ENCODE measurements at regions of chr3 and their contacts with region 1.

Region 1: GRCh38 chr3:45507820-45508317 is 86.7 kb upstream of the LIMD1 start:
- DNase-seq: no peak
- ATAC-seq: no peak
- H3K4me3 ChIP-seq: no peak overlapping the region
- H3K27ac ChIP-seq: no peak overlapping the region
- H3K4me1 ChIP-seq: no peaks in the 10 kb centered on the region
- H3K27me3 ChIP-seq: no peaks in the 10 kb centered on the region
- CTCF ChIP-seq: no peak
- EP300 ChIP-seq: no peak
- POLR2A ChIP-seq: no peak
- RAD21 ChIP-seq: no peak

Region 2: GRCh38 chr3:44942202-44942921 is 565.5 kb before region 1 on chr3:
- CTCF ChIA-PET with region 1: no interaction called
- POLR2A ChIA-PET with region 1: no interaction called
- RAD21 ChIA-PET with region 1: no interaction called
- SMC1A ChIA-PET with region 1: no interaction called
- in situ Hi-C with region 1: no loop called
- intact Hi-C with region 1: no loop called
- DNase-seq: no peak
- ATAC-seq: no peak
- H3K4me3 ChIP-seq: no peak overlapping the region
- H3K27ac ChIP-seq: no peak overlapping the region
- H3K4me1 ChIP-seq: no peaks in the 10 kb centered on the region; the same call in 1 of the 2 replicates
- H3K27me3 ChIP-seq: no peaks in the 10 kb centered on the region
- CTCF ChIP-seq: no peak
- EP300 ChIP-seq: no peak
- POLR2A ChIP-seq: no peak
- RAD21 ChIP-seq: no peak

Region 3: GRCh38 chr3:45528429-45528828 is 20.6 kb after region 1 on chr3:
- CTCF ChIA-PET with region 1: interaction called, 11 read pairs
- POLR2A ChIA-PET with region 1: no interaction called
- RAD21 ChIA-PET with region 1: no interaction called
- SMC1A ChIA-PET with region 1: interaction called, 7 read pairs
- in situ Hi-C with region 1: no loop called
- intact Hi-C with region 1: no loop called
- DNase-seq: no peak
- ATAC-seq: no peak
- H3K4me3 ChIP-seq: no peak overlapping the region
- H3K27ac ChIP-seq: no peak overlapping the region
- H3K4me1 ChIP-seq: no peaks in the 10 kb centered on the region
- H3K27me3 ChIP-seq: no peaks in the 10 kb centered on the region
- CTCF ChIP-seq: no peak
- EP300 ChIP-seq: no peak
- POLR2A ChIP-seq: no peak
- RAD21 ChIP-seq: no peak

Region 4: GRCh38 chr3:45612918-45613602 is 105.2 kb after region 1 on chr3:
- CTCF ChIA-PET with region 1: interaction called, 10 read pairs
- POLR2A ChIA-PET with region 1: no interaction called
- RAD21 ChIA-PET with region 1: no interaction called
- SMC1A ChIA-PET with region 1: interaction called, 5 read pairs
- in situ Hi-C with region 1: no loop called
- intact Hi-C with region 1: no loop called
- DNase-seq: peak; percentile 91
- ATAC-seq: peak; percentile 85
- H3K4me3 ChIP-seq: peak overlapping the region; percentile 15; the same call in 1 of the 2 replicates
- H3K27ac ChIP-seq: peak overlapping the region; percentile 63
- H3K4me1 ChIP-seq: peaks cover 45% of the 10 kb centered on the region
- H3K27me3 ChIP-seq: no peaks in the 10 kb centered on the region
- CTCF ChIP-seq: no peak
- EP300 ChIP-seq: peak; percentile 39 to 62; a peak in 1 of 4 replicates
- POLR2A ChIP-seq: no peak
- RAD21 ChIP-seq: peak; percentile 33

Region 5: DNA sequence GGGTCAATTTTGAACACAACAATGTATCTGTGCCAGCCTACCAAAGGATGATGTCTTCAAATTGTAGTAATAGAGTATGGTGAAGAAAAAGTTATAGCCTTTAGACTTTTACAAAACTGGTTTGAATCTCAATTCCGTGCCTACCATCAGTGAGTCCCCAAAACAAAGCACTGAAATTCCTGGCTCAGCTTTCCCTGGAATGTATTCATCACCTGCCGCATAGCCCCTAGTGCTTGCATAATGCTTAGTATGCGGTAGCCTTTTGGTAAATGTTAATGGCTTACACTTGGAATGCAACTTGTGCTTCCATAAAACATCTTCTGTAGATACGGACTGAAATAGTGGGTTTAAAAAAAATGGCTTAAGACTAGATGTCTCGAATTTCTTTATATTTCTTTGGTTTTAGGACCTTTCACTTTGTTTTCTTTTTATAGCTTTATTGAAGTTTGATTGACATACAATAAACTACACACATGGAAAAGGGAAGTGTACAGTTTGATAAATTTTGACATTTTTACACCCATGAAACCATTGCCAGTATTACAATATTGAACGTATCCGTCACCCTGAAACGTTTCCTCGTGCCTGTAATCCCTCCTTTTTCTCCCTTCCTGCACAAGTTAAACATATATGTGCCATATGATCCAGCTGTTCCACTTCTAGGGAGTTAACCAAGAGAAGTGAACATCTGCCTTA is 193.5 kb after region 1 on chr3:
- CTCF ChIA-PET with region 1: interaction called, 14 read pairs
- POLR2A ChIA-PET with region 1: no interaction called
- RAD21 ChIA-PET with region 1: interaction called, 5 read pairs
- SMC1A ChIA-PET with region 1: interaction called, 4 read pairs
- in situ Hi-C with region 1: no loop called
- intact Hi-C with region 1: no loop called
- DNase-seq: no peak
- ATAC-seq: no peak
- H3K4me3 ChIP-seq: no peak overlapping the region
- H3K27ac ChIP-seq: no peak overlapping the region
- H3K4me1 ChIP-seq: no peaks in the 10 kb centered on the region
- H3K27me3 ChIP-seq: no peaks in the 10 kb centered on the region
- CTCF ChIP-seq: no peak
- EP300 ChIP-seq: no peak
- POLR2A ChIP-seq: no peak
- RAD21 ChIP-seq: no peak

Measured in GM12878 (cell line).